ENCODE measurements at regions of chr16 and their contacts with region 1.

Region 1: GRCh38 chr16:53054670-53055485 is at the start of gene CHD9:
- DNase-seq: peak; percentile 80
- ATAC-seq: peak; percentile 78
- H3K4me3 ChIP-seq: peak within 1 kb of the TSS; percentile 62
- H3K27ac ChIP-seq: peak within 1 kb of the TSS; percentile 91
- H3K4me1 ChIP-seq: peaks cover 20% of the 10 kb centered on the region
- H3K27me3 ChIP-seq: no peaks in the 10 kb centered on the region
- CTCF ChIP-seq: peak; percentile 98
- POLR2A ChIP-seq: no peak; the same call in 1 of the 2 replicates
- RAD21 ChIP-seq: peak; percentile 97
- total RNA-seq, gene CHD9: 48.8 and 61.4 TPM in 2 replicates

Region 2: GRCh38 chr16:53080345-53081031 is 25.6 kb after region 1 on chr16:
- CTCF ChIA-PET with region 1: interaction called, 4 read pairs
- POLR2A ChIA-PET with region 1: interaction called, 3 read pairs
- dilution Hi-C with region 1: no loop called
- in situ Hi-C with region 1: no loop called
- intact Hi-C with region 1: loop called (anchors 2 kb)
- DNase-seq: peak; percentile 89
- ATAC-seq: peak; percentile 92
- H3K4me3 ChIP-seq: peak overlapping the region; percentile 4; the same call in 1 of the 2 replicates
- H3K27ac ChIP-seq: peak overlapping the region; percentile 76; the same call in 1 of the 2 replicates
- H3K4me1 ChIP-seq: peaks cover 19% of the 10 kb centered on the region
- H3K27me3 ChIP-seq: no peaks in the 10 kb centered on the region
- CTCF ChIP-seq: no peak
- POLR2A ChIP-seq: no peak
- RAD21 ChIP-seq: no peak

Region 3: GRCh38 chr16:53099318-53100130 is 44.6 kb after region 1 on chr16:
- CTCF ChIA-PET with region 1: interaction called, 13 read pairs
- POLR2A ChIA-PET with region 1: no interaction called
- dilution Hi-C with region 1: no loop called
- in situ Hi-C with region 1: no loop called
- intact Hi-C with region 1: loop called (anchors 1 kb)
- DNase-seq: peak; percentile 89
- ATAC-seq: peak; percentile 83
- H3K4me3 ChIP-seq: peak overlapping the region; percentile 4
- H3K27ac ChIP-seq: peak overlapping the region; percentile 91
- H3K4me1 ChIP-seq: peaks cover 12% of the 10 kb centered on the region
- H3K27me3 ChIP-seq: no peaks in the 10 kb centered on the region
- CTCF ChIP-seq: no peak
- POLR2A ChIP-seq: peak; percentile 13; the same call in 1 of the 2 replicates
- RAD21 ChIP-seq: peak; percentile 20; the same call in 1 of the 2 replicates

Region 4: DNA sequence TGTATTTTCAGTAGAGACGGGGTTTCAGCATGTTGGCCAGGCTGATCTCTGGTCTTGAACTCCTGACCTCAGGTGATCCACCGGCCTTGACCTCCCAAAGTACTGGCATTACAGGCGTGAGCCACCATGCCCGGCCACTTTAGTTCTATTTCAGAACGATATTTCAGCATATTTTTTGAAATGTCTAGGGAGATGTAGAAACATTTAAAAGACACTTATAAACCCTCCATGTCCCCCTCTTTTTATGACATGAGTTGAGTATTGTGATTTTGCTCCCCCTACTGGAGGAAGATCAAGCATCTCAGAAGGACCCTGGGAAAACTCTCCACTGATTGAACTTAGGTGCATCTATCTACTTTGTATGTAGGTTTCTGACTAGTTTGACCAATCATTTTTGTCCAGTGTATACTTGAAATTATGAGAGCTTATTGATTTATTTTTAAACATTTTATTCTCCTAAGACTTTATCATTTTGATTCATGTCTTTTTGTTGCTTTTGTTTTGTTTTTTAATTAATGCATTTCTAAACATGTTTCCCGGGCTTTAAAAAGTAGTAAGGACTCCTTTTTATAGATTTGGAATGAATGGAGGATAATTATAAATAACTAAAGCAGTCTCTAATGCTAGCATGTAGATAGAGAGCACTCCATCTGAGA is 105.0 kb after region 1 on chr16:
- CTCF ChIA-PET with region 1: interaction called, 13 read pairs
- POLR2A ChIA-PET with region 1: no interaction called
- dilution Hi-C with region 1: no loop called
- in situ Hi-C with region 1: loop called (anchors 10 kb)
- intact Hi-C with region 1: loop called (anchors 1 kb)
- DNase-seq: peak; percentile 62
- ATAC-seq: peak; percentile 75
- H3K4me3 ChIP-seq: no peak overlapping the region
- H3K27ac ChIP-seq: no peak overlapping the region
- H3K4me1 ChIP-seq: peaks cover 2% of the 10 kb centered on the region; the same call in 1 of the 2 replicates
- H3K27me3 ChIP-seq: no peaks in the 10 kb centered on the region
- CTCF ChIP-seq: peak; percentile 60
- POLR2A ChIP-seq: no peak
- RAD21 ChIP-seq: peak; percentile 57

Region 5: DNA sequence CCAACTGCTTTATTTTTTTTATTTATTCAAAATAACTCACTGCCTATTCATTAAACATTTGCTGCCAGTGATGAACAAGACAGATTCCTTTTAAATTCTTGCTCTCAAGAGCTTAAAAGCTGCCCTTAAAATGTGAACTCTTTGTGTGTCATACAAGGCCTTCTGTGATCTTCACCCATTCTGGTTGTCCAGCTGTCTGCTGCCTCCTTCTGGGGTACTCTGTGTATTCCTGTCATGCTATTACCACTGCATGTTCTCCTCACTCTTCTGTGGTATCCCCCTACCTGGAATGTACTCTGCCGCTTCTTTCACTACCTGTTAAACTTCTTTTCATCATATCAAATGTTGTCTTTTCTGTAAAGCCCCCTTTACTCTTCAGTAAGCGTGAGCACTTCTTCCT is 165.7 kb after region 1 on chr16:
- CTCF ChIA-PET with region 1: interaction called, 5 read pairs
- POLR2A ChIA-PET with region 1: no interaction called
- dilution Hi-C with region 1: no loop called
- in situ Hi-C with region 1: loop called (anchors 10 kb)
- intact Hi-C with region 1: loop called (anchors 5 kb)
- DNase-seq: peak; percentile 58
- ATAC-seq: peak; percentile 76
- H3K4me3 ChIP-seq: no peak overlapping the region
- H3K27ac ChIP-seq: no peak overlapping the region
- H3K4me1 ChIP-seq: peaks cover 3% of the 10 kb centered on the region
- H3K27me3 ChIP-seq: no peaks in the 10 kb centered on the region
- CTCF ChIP-seq: peak; percentile 40
- POLR2A ChIP-seq: no peak
- RAD21 ChIP-seq: peak; percentile 53

Region 6: DNA sequence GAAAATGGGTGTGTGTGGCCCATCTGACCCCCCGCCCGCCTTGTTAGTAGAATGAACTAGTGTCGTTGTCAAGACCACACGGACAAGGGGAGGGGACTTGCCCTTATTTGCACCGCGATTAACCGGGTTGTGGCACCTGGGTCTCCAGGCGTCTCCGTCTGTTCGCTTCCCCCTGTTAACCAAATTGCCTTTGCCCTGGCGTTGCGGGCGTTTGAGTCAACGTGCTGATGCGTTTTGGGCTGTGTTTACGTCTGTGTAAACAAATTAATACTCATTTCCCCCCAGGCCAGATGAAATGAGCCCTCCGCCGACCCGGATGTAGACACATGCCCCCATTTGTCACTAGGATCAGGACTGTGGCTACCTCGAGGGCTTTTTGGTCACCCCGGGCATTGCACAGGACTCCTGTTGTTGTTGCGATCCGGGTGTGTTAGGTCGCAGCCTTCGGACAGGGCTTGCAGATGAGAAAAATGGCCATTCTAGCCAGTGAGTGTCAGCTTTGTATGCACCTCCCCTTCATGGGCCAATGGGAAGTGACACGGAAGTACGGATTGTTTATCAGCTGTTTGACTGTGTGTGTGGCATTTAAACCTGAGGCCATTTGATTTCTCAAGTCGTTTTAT is 380.3 kb after region 1 on chr16:
- CTCF ChIA-PET with region 1: no interaction called
- POLR2A ChIA-PET with region 1: interaction called, 5 read pairs
- dilution Hi-C with region 1: no loop called
- in situ Hi-C with region 1: loop called (anchors 25 kb)
- intact Hi-C with region 1: no loop called
- DNase-seq: peak; percentile 89
- ATAC-seq: peak; percentile 86
- H3K4me3 ChIP-seq: peak overlapping the region; percentile 80
- H3K27ac ChIP-seq: peak overlapping the region; percentile 84
- H3K4me1 ChIP-seq: no peaks in the 10 kb centered on the region
- H3K27me3 ChIP-seq: no peaks in the 10 kb centered on the region
- CTCF ChIP-seq: no peak
- POLR2A ChIP-seq: no peak
- RAD21 ChIP-seq: no peak